Activated T-helper 1 cell treated with anti-CD3 and anti-CD28 coated beads, Interleukin-12 subunit alpha, Interleukin-12 subunit beta, Interleukin-2, Interleukin-4 antibody, amounts not matched to agents 30 ng/mL and 10 ng/mL and 1 ng/mL, durations not matched to agents 14 hours and 24 hours and 36 hours (primary cell): ENCODE measurements at regions of chr11 and their contacts with region 1.

Region 1: DNA sequence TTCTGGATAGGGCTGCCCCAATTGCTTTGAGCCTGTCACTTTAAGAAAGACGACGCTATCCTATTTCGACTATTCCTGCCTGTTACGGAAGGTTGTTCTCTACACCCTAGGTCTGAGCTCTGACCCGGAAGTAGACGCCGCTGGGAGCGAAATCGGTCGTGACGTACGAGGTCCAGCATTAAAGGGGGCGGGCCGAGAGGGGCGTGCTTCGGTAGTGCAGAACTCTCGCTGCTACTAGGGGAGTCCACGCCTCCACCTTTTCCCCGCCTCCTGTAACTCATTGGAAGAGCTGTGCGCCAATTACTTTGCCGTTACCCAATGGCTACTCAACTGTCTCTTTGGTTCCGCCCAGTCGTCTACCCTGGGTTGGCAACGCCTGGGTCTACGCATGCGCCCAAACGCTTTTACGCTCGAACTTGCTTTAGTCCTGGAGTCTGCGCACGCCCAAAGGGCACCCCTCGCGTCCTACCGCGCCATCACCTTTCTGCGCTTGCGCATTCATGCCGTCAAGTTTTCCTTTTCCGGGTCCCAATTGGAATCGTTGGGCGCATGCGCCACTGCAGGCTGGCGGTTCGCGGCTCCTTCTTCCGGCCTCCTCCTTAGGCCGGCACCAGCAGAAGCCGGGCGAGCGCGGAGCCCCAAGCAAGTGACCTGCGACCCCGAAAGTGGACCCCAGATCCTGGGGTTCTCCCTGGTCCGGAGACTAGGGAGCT is at the start of gene PCNX3:
- DNase-seq: peak; percentile 100
- H3K4me3 Mint-ChIP-seq: peak within 1 kb of the TSS; percentile 97
- H3K27ac Mint-ChIP-seq: peak within 1 kb of the TSS; percentile 94
- H3K4me1 Mint-ChIP-seq: peaks cover 27% of the 10 kb centered on the region
- H3K27me3 Mint-ChIP-seq: no peaks in the 10 kb centered on the region
- total RNA-seq, gene PCNX3: 55.0 and 55.2 TPM in 2 replicates

Region 2: GRCh38 chr11:64924102-64924851 is 691.1 kb before region 1 on chr11 and contains the start of gene PPP2R5B:
- intact Hi-C with region 1: loop called (anchors 1 kb)
- DNase-seq: peak; percentile 89
- H3K4me3 Mint-ChIP-seq: peak within 1 kb of the TSS; percentile 93
- H3K27ac Mint-ChIP-seq: peak within 1 kb of the TSS; percentile 97
- H3K4me1 Mint-ChIP-seq: peaks cover 20% of the 10 kb centered on the region
- H3K27me3 Mint-ChIP-seq: no peaks in the 10 kb centered on the region
- total RNA-seq, gene PPP2R5B: 7.3 and 14.0 TPM in 2 replicates

Region 3: GRCh38 chr11:65540297-65541092 is 74.9 kb before region 1 on chr11:
- intact Hi-C with region 1: loop called (anchors 1 kb)
- DNase-seq: peak; percentile 86
- H3K4me3 Mint-ChIP-seq: peak overlapping the region; percentile 85
- H3K27ac Mint-ChIP-seq: peak overlapping the region; percentile 88
- H3K4me1 Mint-ChIP-seq: peaks cover 28% of the 10 kb centered on the region
- H3K27me3 Mint-ChIP-seq: no peaks in the 10 kb centered on the region

Region 4: DNA sequence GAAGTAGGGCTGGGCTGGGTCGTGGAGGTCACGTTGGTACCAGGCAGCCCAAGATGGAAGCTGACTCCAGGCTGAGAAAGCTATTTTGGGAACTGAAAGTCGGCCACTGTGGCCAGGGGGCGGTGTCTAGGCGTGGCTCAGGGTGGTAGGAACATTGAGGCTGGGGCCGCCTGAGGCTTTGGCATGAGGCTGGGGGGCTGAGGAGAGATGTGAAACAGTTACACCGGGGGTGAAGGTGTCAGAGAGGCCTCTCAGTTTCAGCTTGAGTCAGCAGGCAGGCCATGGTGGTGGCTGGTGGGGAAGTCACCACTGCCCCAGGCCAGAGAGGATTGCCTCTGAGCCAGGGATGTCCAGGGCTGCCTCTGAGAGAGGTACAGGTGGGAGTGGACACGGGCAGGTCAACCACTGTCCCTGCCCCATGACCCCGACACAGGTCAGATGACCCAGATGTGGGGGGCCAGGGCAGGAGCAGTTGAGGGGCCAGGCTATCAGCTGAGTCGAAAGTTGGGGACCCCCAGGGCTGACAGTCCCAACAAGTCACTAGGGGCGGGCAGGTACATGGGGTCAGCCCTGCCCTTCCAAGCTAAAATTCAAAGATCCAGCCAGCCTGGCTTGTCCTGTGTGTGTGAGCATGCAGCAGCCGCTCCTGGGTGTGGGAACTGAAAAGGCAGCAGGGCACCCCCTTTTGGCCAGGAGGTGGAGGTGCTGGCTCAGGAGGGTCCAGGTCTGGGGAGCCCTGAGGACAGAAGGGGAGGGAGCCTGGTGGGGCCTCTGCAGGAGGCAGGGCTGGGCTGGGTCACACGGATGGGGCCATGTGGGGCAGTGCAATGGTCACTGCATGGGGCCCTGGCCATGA is 27.0 kb before region 1 on chr11:
- intact Hi-C with region 1: loop called (anchors 1 kb)
- DNase-seq: peak; percentile 67
- H3K4me3 Mint-ChIP-seq: peak overlapping the region; percentile 66
- H3K27ac Mint-ChIP-seq: peak overlapping the region; percentile 94
- H3K4me1 Mint-ChIP-seq: peaks cover 31% of the 10 kb centered on the region
- H3K27me3 Mint-ChIP-seq: no peaks in the 10 kb centered on the region

Region 5: GRCh38 chr11:65662799-65663638 is 47.6 kb after region 1 on chr11 and contains the start of gene RELA:
- intact Hi-C with region 1: loop called (anchors 1 kb)
- DNase-seq: peak; percentile 89
- H3K4me3 Mint-ChIP-seq: peak within 1 kb of the TSS; percentile 89
- H3K27ac Mint-ChIP-seq: peak within 1 kb of the TSS; percentile 93
- H3K4me1 Mint-ChIP-seq: peaks cover 30% of the 10 kb centered on the region
- H3K27me3 Mint-ChIP-seq: no peaks in the 10 kb centered on the region
- total RNA-seq, gene RELA: 102 and 104 TPM in 2 replicates

Region 6: GRCh38 chr11:65919146-65920033 is 304.0 kb after region 1 on chr11 and contains the start of gene DRAP1:
- intact Hi-C with region 1: loop called (anchors 1 kb)
- DNase-seq: peak; percentile 97
- H3K4me3 Mint-ChIP-seq: peak within 1 kb of the TSS; percentile 94
- H3K27ac Mint-ChIP-seq: peak within 1 kb of the TSS; percentile 84
- H3K4me1 Mint-ChIP-seq: peaks cover 17% of the 10 kb centered on the region
- H3K27me3 Mint-ChIP-seq: no peaks in the 10 kb centered on the region
- total RNA-seq, gene DRAP1: 119 and 129 TPM in 2 replicates